ENCODE measurements at regions of chr18 and their contacts with region 1.

Region 1: DNA sequence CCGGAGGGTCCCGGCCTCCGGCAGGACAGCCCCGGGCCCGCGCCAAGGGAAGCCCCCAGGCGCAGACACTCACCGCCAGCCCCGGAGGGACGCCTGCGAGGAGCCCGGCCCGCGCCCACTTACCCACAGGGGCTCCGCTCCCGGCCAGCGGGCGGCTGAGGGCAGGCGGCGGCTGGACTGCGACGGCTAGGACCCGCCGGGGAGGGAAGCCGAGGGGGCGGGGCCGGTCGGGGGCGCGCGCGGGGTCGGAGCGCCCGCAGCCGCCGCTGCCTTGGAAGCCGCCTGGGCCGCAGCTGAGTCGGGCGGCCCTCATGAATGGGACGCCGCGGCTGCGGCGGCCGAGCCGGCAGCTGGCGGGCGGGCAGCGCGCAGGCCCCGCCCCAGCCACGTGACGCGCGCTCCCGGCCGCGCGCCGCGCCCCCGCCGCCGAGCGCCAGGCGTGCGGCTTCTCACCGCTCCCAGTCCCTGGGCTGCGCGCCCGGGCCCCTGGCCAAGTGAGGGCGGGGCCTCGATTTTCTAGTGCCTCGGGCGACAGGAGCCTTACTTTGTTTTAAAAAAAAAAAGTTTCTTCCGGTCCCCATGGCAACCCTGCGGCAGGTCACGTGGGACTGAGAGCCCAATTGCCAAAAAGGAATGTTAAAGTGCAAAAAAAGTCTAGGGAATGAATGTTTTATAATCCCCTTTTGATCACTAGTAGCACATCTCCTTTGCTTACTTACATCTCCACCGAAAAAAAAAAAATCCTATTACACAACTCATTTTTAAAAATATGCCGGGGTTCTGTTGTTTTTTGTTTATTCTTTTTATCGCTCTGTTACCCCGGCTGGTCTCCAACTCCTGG is at the start of gene LPIN2:
- DNase-seq: peak; percentile 71
- ATAC-seq: peak; percentile 88
- H3K4me3 ChIP-seq: peak within 1 kb of the TSS; percentile 74
- H3K27ac ChIP-seq: peak within 1 kb of the TSS; percentile 71
- H3K4me1 ChIP-seq: peaks cover 14% of the 10 kb centered on the region
- H3K27me3 ChIP-seq: no peaks in the 10 kb centered on the region
- CTCF ChIP-seq: no peak
- EP300 ChIP-seq: peak in 1 of 2 experiments; percentile 44; a peak in 1 of 4 replicates
- POLR2A ChIP-seq: peak; percentile 61; the same call in 1 of the 2 replicates
- RAD21 ChIP-seq: no peak
- polyA plus RNA-seq, gene LPIN2: 4.1 to 4.5 TPM

Region 2: GRCh38 chr18:2197945-2198344 is 815.2 kb before region 1 on chr18:
- CTCF ChIA-PET with region 1: no interaction called
- POLR2A ChIA-PET with region 1: no interaction called
- RAD21 ChIA-PET with region 1: no interaction called
- SMC1A ChIA-PET with region 1: no interaction called
- in situ Hi-C with region 1: no loop called
- intact Hi-C with region 1: no loop called
- DNase-seq: no peak
- ATAC-seq: no peak
- H3K4me3 ChIP-seq: no peak overlapping the region
- H3K27ac ChIP-seq: no peak overlapping the region
- H3K4me1 ChIP-seq: no peaks in the 10 kb centered on the region
- H3K27me3 ChIP-seq: no peaks in the 10 kb centered on the region
- CTCF ChIP-seq: no peak
- EP300 ChIP-seq: no peak
- POLR2A ChIP-seq: no peak
- RAD21 ChIP-seq: no peak

Region 3: GRCh38 chr18:3074087-3074486 is 60.9 kb after region 1 on chr18:
- CTCF ChIA-PET with region 1: no interaction called
- POLR2A ChIA-PET with region 1: no interaction called
- RAD21 ChIA-PET with region 1: no interaction called
- SMC1A ChIA-PET with region 1: no interaction called
- in situ Hi-C with region 1: no loop called
- intact Hi-C with region 1: loop called (anchors 5 kb)
- DNase-seq: no peak
- ATAC-seq: peak; percentile 46
- H3K4me3 ChIP-seq: no peak overlapping the region
- H3K27ac ChIP-seq: no peak overlapping the region
- H3K4me1 ChIP-seq: no peaks in the 10 kb centered on the region
- H3K27me3 ChIP-seq: no peaks in the 10 kb centered on the region
- CTCF ChIP-seq: no peak
- EP300 ChIP-seq: no peak
- POLR2A ChIP-seq: no peak
- RAD21 ChIP-seq: no peak